ENCODE measurements at regions of chr19 and their contacts with region 1.

Region 1: GRCh38 chr19:16324384-16325160 is at the start of gene KLF2:
- DNase-seq: peak; percentile 96
- H3K4me3 Mint-ChIP-seq: peak within 1 kb of the TSS; percentile 69
- H3K27ac Mint-ChIP-seq: peak within 1 kb of the TSS; percentile 74
- H3K4me1 Mint-ChIP-seq: peaks cover 42% of the 10 kb centered on the region
- H3K27me3 Mint-ChIP-seq: peaks cover 30% of the 10 kb centered on the region
- total RNA-seq, gene KLF2: 410 to 423 TPM

Region 2: GRCh38 chr19:15737723-15738122 is 586.8 kb before region 1 on chr19 and contains the start of gene OR10H3:
- CTCF ChIA-PET with region 1: no interaction called
- POLR2A ChIA-PET with region 1: no interaction called
- DNase-seq: no peak
- H3K4me3 Mint-ChIP-seq: no peak within 1 kb of the TSS
- H3K27ac Mint-ChIP-seq: no peak within 1 kb of the TSS
- H3K4me1 Mint-ChIP-seq: no peaks in the 10 kb centered on the region
- H3K27me3 Mint-ChIP-seq: peaks cover 3% of the 10 kb centered on the region
- total RNA-seq, gene OR10H3: not detected

Region 3: GRCh38 chr19:16197622-16198369 is 126.8 kb before region 1 on chr19 and contains the start of gene AP1M1:
- CTCF ChIA-PET with region 1: interaction called, 3 read pairs
- POLR2A ChIA-PET with region 1: interaction called, 18 read pairs
- DNase-seq: peak; percentile 99
- H3K4me3 Mint-ChIP-seq: peak within 1 kb of the TSS; percentile 87
- H3K27ac Mint-ChIP-seq: peak within 1 kb of the TSS; percentile 95
- H3K4me1 Mint-ChIP-seq: peaks cover 55% of the 10 kb centered on the region
- H3K27me3 Mint-ChIP-seq: no peaks in the 10 kb centered on the region
- total RNA-seq, gene AP1M1: 131 to 151 TPM

Region 4: GRCh38 chr19:16259385-16260159 is 65.0 kb before region 1 on chr19:
- CTCF ChIA-PET with region 1: interaction called, 3 read pairs
- POLR2A ChIA-PET with region 1: interaction called, 68 read pairs
- DNase-seq: peak; percentile 60
- H3K4me3 Mint-ChIP-seq: peak overlapping the region; percentile 27
- H3K27ac Mint-ChIP-seq: peak overlapping the region; percentile 72
- H3K4me1 Mint-ChIP-seq: peaks cover 68% of the 10 kb centered on the region
- H3K27me3 Mint-ChIP-seq: peaks cover 3% of the 10 kb centered on the region

Region 5: GRCh38 chr19:16283210-16284061 is 41.1 kb before region 1 on chr19:
- CTCF ChIA-PET with region 1: interaction called, 3 read pairs
- POLR2A ChIA-PET with region 1: interaction called, 15 read pairs
- DNase-seq: peak; percentile 53
- H3K4me3 Mint-ChIP-seq: peak overlapping the region; percentile 21
- H3K27ac Mint-ChIP-seq: peak overlapping the region; percentile 40
- H3K4me1 Mint-ChIP-seq: peaks cover 32% of the 10 kb centered on the region
- H3K27me3 Mint-ChIP-seq: peaks cover 23% of the 10 kb centered on the region

Region 6: DNA sequence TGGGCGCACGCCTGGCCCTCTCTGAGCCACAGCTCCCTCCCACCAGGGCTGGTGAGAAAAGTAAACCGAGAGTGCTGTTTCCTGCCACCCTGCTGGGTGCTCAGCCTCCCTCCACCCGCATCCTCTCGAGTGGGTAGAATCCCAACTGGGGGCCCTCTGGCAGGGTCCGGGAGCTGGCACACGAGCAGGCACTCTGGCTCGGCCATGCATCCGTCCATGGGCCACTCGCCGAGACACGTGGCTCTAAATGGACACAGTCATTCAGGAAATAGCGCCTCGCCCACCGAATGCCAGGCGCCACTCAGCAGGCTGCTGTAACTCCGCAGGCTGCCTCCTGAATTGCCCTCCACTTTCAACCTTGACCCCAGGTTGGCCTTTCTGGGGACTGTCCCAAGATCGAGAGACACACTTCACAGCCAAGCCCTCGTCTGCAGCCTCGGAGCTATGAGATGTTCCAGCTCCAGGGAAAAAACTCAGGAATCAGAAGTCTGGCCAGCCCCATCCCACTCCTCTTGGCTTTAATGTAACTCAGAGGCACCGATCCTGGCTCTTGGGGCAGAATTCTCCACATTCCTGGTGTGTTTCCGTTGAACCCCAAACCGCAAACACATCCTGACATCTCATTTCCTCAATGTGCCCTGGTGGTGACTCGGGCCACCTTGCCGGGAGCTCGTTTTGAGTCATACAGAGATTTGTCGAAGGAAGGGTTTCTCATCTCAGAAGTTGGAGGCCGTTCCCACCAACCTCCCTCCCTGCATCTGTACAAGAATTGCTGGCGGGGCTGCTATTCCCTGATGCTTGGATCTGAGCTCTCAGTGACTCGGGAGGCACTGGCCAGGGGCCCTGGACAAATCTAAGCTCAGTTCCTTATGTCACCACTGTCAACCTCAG is 14.1 kb after region 1 on chr19:
- CTCF ChIA-PET with region 1: interaction called, 41 read pairs
- POLR2A ChIA-PET with region 1: interaction called, 423 read pairs
- DNase-seq: peak; percentile 83
- H3K4me3 Mint-ChIP-seq: peak overlapping the region; percentile 67
- H3K27ac Mint-ChIP-seq: peak overlapping the region; percentile 85
- H3K4me1 Mint-ChIP-seq: peaks cover 70% of the 10 kb centered on the region
- H3K27me3 Mint-ChIP-seq: peaks cover 4% of the 10 kb centered on the region

Region 7: DNA sequence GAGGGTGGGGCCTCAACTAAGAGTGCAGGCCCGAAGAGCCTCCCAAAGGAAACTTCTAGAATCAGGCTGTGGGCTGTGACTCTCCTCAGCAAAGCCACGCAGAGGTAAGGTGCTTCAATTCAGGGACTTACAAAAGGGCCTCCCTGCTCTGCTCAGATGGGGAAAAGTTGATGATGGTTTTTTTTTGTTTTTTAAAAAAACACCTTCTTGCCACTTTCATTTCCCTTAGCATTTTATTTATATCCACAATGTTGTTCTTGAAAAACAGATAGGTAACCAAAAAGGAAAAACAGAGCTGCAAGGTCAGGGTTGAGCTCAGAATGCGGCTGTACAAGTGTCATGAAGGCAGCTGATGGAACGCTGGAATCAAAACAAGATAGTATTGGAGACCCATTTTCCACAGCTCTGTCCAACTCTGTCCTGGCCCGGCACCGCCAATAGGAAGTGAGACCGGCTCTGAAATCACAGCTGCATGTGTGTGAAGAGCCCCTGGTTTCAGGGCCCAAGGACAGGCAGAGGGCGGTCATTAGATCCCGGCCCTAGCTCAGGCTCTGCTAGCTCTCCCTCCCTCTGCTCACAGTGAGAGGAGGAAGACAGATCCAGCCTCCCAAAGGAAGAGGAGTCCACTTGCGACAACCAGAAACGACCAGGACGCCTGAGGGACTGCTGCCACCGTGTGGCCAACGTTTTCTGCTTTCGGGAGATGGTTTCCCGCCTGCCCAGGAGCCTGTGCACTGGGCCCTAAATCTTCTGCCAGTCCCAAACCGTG is 58.4 kb after region 1 on chr19:
- CTCF ChIA-PET with region 1: interaction called, 113 read pairs
- POLR2A ChIA-PET with region 1: interaction called, 3,221 read pairs
- DNase-seq: peak; percentile 87
- H3K4me3 Mint-ChIP-seq: peak overlapping the region; percentile 32
- H3K27ac Mint-ChIP-seq: peak overlapping the region; percentile 82
- H3K4me1 Mint-ChIP-seq: peaks cover 47% of the 10 kb centered on the region
- H3K27me3 Mint-ChIP-seq: no peaks in the 10 kb centered on the region

Region 8: GRCh38 chr19:16676101-16676792 is 351.7 kb after region 1 on chr19:
- CTCF ChIA-PET with region 1: no interaction called
- POLR2A ChIA-PET with region 1: no interaction called
- DNase-seq: no peak
- H3K4me3 Mint-ChIP-seq: no peak overlapping the region
- H3K27ac Mint-ChIP-seq: no peak overlapping the region
- H3K4me1 Mint-ChIP-seq: no peaks in the 10 kb centered on the region
- H3K27me3 Mint-ChIP-seq: no peaks in the 10 kb centered on the region